Sciatic nerve (tissue), 2 donors: ENCODE measurements at regions of chr11 and their contacts with region 1.

Region 1: GRCh38 chr11:128831174-128832120 is 35.6 kb downstream of the KCNJ1 start:
- DNase-seq: peak; percentile 91
- ATAC-seq: peak; percentile 89

Region 2: GRCh38 chr11:128157423-128158298 is 673.8 kb before region 1 on chr11:
- intact Hi-C with region 1: loop called (anchors 5 kb)
- DNase-seq: no peak
- ATAC-seq: peak; percentile 92